ENCODE measurements at regions of chr3 and their contacts with region 1.

Region 1: GRCh38 chr3:25594007-25594502 is 70.7 kb downstream of the TOP2B start:
- DNase-seq: no peak
- ATAC-seq: peak; percentile 64
- H3K4me3 Mint-ChIP-seq: no peak overlapping the region
- H3K27ac Mint-ChIP-seq: no peak overlapping the region
- H3K4me1 Mint-ChIP-seq: no peaks in the 10 kb centered on the region
- H3K27me3 Mint-ChIP-seq: no peaks in the 10 kb centered on the region
- CTCF ChIP-seq: peak; percentile 33

Region 2: DNA sequence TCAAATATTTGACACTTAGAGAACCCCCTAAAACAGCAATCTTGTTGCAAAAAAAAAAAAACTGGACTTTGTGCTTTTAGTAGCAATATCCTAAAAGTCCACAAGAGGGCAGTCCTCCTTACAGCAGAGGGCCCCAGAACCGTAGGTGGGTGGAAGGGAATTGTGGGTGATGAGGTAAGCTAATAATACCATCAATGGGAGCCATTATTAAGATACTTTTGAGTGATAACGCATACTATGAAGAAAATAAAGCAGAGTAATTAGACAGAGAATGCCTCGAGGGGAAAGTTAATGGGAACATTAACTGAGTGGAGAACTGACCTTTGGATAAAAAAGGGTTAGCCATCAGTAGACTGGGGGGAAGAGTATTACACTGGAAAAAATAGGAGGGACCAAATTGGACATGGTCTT is 1329.3 kb before region 1 on chr3:
- CTCF ChIA-PET with region 1: no interaction called
- POLR2A ChIA-PET with region 1: no interaction called
- intact Hi-C with region 1: loop called (anchors 5 kb)
- DNase-seq: no peak
- ATAC-seq: peak; percentile 49
- H3K4me3 Mint-ChIP-seq: no peak overlapping the region
- H3K27ac Mint-ChIP-seq: no peak overlapping the region
- H3K4me1 Mint-ChIP-seq: no peaks in the 10 kb centered on the region
- H3K27me3 Mint-ChIP-seq: peaks cover 6% of the 10 kb centered on the region
- CTCF ChIP-seq: peak; percentile 59

Region 3: GRCh38 chr3:24773798-24774197 is 820.3 kb before region 1 on chr3:
- CTCF ChIA-PET with region 1: no interaction called
- POLR2A ChIA-PET with region 1: no interaction called
- intact Hi-C with region 1: loop called (anchors 5 kb)
- DNase-seq: no peak
- ATAC-seq: no peak
- H3K4me3 Mint-ChIP-seq: no peak overlapping the region
- H3K27ac Mint-ChIP-seq: no peak overlapping the region
- H3K4me1 Mint-ChIP-seq: no peaks in the 10 kb centered on the region
- H3K27me3 Mint-ChIP-seq: no peaks in the 10 kb centered on the region
- CTCF ChIP-seq: no peak